ENCODE measurements at regions of chr3 and their contacts with region 1.

Region 1: DNA sequence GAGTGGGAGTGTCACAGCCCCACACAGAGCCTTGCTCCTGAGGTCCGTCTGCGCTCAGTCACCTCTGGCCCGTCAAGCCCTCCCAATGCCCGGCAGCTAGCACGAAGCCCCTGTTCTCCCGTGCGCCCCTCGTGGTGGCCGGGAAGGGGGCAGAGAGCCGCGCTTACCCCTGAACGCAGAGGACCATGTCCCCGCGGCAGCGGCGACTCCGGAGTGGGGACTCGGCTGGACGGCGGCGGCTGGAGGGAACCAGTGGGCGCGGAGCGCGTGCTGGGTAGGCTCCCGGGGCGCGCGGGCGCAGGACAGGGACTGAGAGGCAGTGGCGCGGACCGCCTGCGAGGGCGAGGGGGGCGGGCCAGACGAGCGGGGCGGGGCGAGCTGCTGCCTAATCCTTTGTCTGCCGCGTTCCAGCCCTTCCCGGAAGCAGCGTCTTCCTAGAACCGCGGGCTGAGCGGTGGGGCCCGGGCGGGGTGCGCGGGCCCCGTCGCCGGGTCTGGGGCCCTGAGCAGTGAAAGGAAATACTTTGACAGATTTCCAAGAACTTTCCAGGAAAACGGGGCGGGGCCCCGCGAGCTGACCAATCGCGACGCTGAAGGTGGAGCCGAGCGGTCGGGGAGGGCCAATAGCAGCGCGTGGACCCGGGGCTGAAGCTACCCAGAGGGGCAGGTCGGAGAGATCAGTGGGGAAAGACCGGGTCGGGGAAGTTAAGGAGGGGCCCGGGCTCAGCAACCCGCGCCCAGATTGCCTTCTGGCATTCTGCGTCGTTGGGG is at the start of gene CISH:
- DNase-seq: peak; percentile 99
- ATAC-seq: peak; percentile 68
- H3K4me3 Mint-ChIP-seq: peak within 1 kb of the TSS; percentile 96
- H3K27ac Mint-ChIP-seq: peak within 1 kb of the TSS; percentile 100
- H3K4me1 Mint-ChIP-seq: peaks cover 39% of the 10 kb centered on the region
- H3K27me3 Mint-ChIP-seq: no peaks in the 10 kb centered on the region
- total RNA-seq, gene CISH: 265 to 269 TPM

Region 2: GRCh38 chr3:50235716-50236496 is 375.7 kb before region 1 on chr3 and contains the start of gene GNAI2:
- CTCF ChIA-PET with region 1: no interaction called
- POLR2A ChIA-PET with region 1: no interaction called
- intact Hi-C with region 1: loop called in 1 of 2 experiments (anchors 5 kb)
- DNase-seq: peak; percentile 99
- ATAC-seq: peak; percentile 92
- H3K4me3 Mint-ChIP-seq: peak within 1 kb of the TSS; percentile 90
- H3K27ac Mint-ChIP-seq: peak within 1 kb of the TSS; percentile 96
- H3K4me1 Mint-ChIP-seq: peaks cover 31% of the 10 kb centered on the region
- H3K27me3 Mint-ChIP-seq: no peaks in the 10 kb centered on the region
- total RNA-seq, gene GNAI2: 280 to 341 TPM

Region 3: GRCh38 chr3:50350527-50351322 is 260.9 kb before region 1 on chr3 and contains the starts of genes CYB561D2 and NPRL2:
- CTCF ChIA-PET with region 1: interaction called, 3 read pairs
- POLR2A ChIA-PET with region 1: interaction called, 5 read pairs
- intact Hi-C with region 1: loop called (anchors 5 kb)
- DNase-seq: peak; percentile 99
- ATAC-seq: peak; percentile 90
- H3K4me3 Mint-ChIP-seq: peak within 1 kb of the TSS; percentile 90
- H3K27ac Mint-ChIP-seq: peak within 1 kb of the TSS; percentile 97
- H3K4me1 Mint-ChIP-seq: peaks cover 55% of the 10 kb centered on the region
- H3K27me3 Mint-ChIP-seq: no peaks in the 10 kb centered on the region
- total RNA-seq, gene CYB561D2: 10.3 to 14.3 TPM
- total RNA-seq, gene NPRL2: 42.5 to 43.0 TPM

Region 4: DNA sequence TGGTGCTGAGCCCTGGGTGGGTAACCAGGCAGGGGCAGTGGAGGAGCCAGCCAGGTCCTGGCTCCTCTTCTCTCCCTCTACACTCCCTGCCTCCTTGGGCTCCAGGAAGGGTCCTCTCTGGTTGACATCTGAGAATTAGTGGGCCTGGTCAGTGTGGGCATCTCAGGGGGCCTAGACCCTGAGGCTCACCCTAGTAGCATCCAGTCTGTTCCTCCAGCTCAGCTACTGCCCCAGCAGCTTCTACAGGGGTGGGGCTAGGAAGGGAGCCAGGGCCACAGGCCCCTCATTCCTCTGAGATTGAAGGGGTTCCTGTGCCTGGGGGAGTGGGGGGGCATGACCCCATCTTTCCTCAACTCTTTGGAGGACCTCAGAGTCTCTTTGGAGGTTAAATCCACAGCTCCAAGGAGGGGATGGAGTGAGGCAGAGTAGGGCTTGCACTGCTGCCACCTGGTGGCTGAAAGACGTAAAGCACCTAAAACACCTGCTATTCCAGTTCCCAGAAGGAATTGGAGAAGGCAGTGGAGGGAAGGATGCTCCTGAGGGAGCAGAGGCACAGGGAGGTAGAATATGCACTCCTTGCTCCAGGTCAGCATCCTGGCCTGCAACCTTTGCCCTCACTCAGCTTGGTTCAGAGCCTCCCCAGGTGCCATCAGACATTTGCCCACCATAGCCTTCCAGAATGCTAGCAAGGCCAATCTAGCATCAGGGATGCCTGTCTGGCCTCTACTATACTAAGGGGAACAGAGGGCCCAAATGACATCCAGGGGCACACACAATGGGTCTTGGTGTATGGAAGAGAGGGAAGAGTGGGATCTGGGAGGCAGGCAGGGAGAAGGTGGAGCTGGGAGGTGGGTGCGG is 69.2 kb before region 1 on chr3:
- CTCF ChIA-PET with region 1: interaction called, 13 read pairs
- POLR2A ChIA-PET with region 1: interaction called, 4 read pairs
- intact Hi-C with region 1: no loop called
- DNase-seq: peak; percentile 78
- ATAC-seq: peak; percentile 78
- H3K4me3 Mint-ChIP-seq: no peak overlapping the region
- H3K27ac Mint-ChIP-seq: no peak overlapping the region
- H3K4me1 Mint-ChIP-seq: no peaks in the 10 kb centered on the region
- H3K27me3 Mint-ChIP-seq: no peaks in the 10 kb centered on the region

Region 5: GRCh38 chr3:50627407-50628051 is 15.9 kb after region 1 on chr3:
- CTCF ChIA-PET with region 1: interaction called, 41 read pairs
- POLR2A ChIA-PET with region 1: interaction called, 3 read pairs
- intact Hi-C with region 1: loop called in 1 of 2 experiments (anchors 1 kb)
- DNase-seq: peak; percentile 59
- ATAC-seq: peak; percentile 42
- H3K4me3 Mint-ChIP-seq: no peak overlapping the region
- H3K27ac Mint-ChIP-seq: peak overlapping the region; percentile 77
- H3K4me1 Mint-ChIP-seq: peaks cover 97% of the 10 kb centered on the region
- H3K27me3 Mint-ChIP-seq: no peaks in the 10 kb centered on the region

Region 6: DNA sequence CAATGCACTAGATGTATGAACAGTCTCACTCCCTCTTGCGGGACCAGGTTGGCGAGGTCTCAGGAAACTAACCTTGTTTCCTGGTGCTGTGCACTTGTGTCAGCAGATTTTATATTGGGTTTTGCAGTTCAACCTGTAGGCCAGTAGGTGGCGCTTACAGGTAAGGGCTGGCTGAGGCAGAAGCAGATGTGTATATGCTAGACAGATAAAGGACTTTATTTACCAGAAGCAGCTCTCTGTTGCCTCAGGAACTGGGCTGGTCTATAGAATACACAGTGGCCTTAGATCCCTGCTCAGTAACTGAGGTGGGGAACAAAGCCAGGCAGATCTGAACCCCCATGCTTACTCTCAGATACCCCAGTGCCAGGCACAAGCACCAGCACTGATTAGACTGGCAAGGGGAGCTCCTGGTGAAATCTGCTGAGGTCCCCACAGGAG is 359.9 kb after region 1 on chr3:
- CTCF ChIA-PET with region 1: interaction called, 4 read pairs
- POLR2A ChIA-PET with region 1: no interaction called
- intact Hi-C with region 1: loop called in 1 of 2 experiments (anchors 1 kb)
- DNase-seq: peak; percentile 66
- ATAC-seq: peak; percentile 85
- H3K4me3 Mint-ChIP-seq: no peak overlapping the region
- H3K27ac Mint-ChIP-seq: no peak overlapping the region
- H3K4me1 Mint-ChIP-seq: peaks cover 19% of the 10 kb centered on the region
- H3K27me3 Mint-ChIP-seq: peaks cover 2% of the 10 kb centered on the region

Region 7: GRCh38 chr3:51498876-51499738 is 887.5 kb after region 1 on chr3:
- CTCF ChIA-PET with region 1: interaction called, 3 read pairs
- POLR2A ChIA-PET with region 1: interaction called, 3 read pairs
- intact Hi-C with region 1: loop called (anchors 1 to 5 kb)
- DNase-seq: peak; percentile 94
- ATAC-seq: peak; percentile 75
- H3K4me3 Mint-ChIP-seq: peak overlapping the region; percentile 88
- H3K27ac Mint-ChIP-seq: peak overlapping the region; percentile 97
- H3K4me1 Mint-ChIP-seq: peaks cover 16% of the 10 kb centered on the region
- H3K27me3 Mint-ChIP-seq: no peaks in the 10 kb centered on the region